WTC11 (cell line): ENCODE measurements at regions of chr7 and their contacts with region 1.

Region 1: DNA sequence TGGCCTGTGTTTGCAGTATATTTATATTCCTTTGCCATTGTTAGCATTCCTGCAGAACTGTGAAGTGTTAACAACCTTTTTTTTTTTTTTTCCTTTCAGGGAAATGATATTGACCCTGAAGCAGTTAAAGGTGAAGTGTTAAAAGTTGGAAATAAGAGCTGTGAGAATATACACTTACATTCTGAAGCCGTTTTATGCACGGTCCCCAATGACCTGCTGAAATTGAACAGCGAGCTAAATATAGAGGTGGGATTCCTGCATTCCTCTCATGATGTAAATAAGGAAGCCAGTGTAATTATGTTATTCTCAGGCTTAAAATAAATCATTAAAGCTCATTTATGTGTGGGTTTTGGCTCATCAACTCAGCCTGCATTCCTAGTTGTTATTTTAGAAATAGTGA is 92.8 kb upstream of the CAPZA2 start:
- DNase-seq: no peak
- ATAC-seq: no peak
- H3K4me3 Mint-ChIP-seq: no peak overlapping the region
- H3K27ac Mint-ChIP-seq: no peak overlapping the region
- H3K4me1 Mint-ChIP-seq: no peaks in the 10 kb centered on the region
- H3K27me3 Mint-ChIP-seq: peaks cover 40% of the 10 kb centered on the region
- CTCF ChIP-seq: no peak

Region 2: DNA sequence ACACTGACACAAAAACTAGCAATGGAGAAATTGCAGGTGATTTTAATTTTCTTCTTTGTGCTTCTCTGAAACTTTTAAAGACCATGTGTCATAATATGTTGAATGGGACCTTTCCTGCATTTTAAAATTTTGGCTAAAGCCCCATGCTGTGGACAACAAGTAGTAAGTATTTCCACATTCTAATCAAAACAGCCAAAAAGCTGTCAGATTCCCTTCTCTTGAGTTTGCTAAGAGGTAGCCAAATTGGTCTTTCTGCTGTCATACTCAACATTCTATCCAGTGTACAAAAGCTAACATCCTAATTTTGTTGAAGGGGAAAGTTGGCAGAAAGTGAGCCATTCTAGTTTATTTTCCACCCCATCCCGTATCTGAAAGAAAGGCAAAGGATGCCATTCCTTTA is 1186.6 kb before region 1 on chr7:
- CTCF ChIA-PET with region 1: no interaction called
- POLR2A ChIA-PET with region 1: interaction called, 10 read pairs
- DNase-seq: no peak
- ATAC-seq: no peak
- H3K4me3 Mint-ChIP-seq: no peak overlapping the region
- H3K27ac Mint-ChIP-seq: no peak overlapping the region
- H3K4me1 Mint-ChIP-seq: peaks cover 13% of the 10 kb centered on the region
- H3K27me3 Mint-ChIP-seq: no peaks in the 10 kb centered on the region
- CTCF ChIP-seq: no peak